Activated T-helper 2 cell treated with anti-CD3 and anti-CD28 coated beads, Interferon-gamma antibody, Interleukin-2, Interleukin-4, amounts not matched to agents 10 μg/mL and 5 μg/mL and 100 μg/mL, durations not matched to agents 14 hours and 24 hours and 36 hours (primary cell): ENCODE measurements at regions of chr19 and their contacts with region 1.

Region 1: DNA sequence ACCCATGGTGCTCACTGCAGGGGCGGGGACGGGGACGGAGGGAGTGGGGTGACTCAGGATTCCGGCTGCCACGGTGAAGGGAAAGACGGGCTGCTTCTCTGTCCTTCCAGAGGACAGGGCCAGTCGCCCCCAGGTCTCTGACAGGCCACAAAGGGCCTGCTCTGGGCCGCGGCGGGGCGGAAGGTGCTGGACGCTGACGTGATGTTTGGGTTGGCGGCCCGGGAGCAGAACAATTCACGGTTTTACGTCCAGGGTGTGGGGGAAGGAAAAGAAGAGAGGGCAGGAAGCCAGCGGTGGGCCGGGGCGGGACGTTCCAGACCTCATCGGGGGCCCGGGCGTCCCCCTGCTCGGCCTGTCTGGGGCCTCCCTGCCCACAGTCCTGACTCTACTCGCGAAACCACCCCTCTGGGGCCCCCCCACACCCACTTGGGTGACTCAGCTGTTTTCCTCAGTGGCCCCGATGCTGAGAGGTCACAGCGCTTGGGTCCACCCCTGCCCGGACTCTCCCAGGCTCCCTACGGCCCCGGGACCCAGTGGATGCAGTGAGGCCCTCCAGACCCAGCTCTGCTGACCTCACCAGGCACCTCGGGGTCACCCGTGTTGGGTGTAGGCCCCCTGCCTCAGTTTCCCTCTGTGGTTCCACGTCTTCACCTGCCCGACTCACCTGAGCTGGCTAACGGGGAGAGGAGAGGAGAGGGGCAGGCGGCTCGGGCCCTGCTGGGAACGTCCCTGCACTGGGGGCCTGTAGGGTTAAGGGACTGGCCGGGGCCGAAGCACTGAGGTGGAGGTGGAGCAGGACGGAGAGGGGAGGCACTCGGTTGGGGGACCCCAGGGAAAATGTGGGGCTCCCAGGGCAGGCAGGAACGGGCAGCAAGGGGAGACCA is 29.2 kb downstream of the PIP5K1C start:
- DNase-seq: no peak
- H3K4me3 Mint-ChIP-seq: peak overlapping the region; percentile 47
- H3K27ac Mint-ChIP-seq: peak overlapping the region; percentile 68
- H3K4me1 Mint-ChIP-seq: peaks cover 6% of the 10 kb centered on the region
- H3K27me3 Mint-ChIP-seq: no peaks in the 10 kb centered on the region

Region 2: DNA sequence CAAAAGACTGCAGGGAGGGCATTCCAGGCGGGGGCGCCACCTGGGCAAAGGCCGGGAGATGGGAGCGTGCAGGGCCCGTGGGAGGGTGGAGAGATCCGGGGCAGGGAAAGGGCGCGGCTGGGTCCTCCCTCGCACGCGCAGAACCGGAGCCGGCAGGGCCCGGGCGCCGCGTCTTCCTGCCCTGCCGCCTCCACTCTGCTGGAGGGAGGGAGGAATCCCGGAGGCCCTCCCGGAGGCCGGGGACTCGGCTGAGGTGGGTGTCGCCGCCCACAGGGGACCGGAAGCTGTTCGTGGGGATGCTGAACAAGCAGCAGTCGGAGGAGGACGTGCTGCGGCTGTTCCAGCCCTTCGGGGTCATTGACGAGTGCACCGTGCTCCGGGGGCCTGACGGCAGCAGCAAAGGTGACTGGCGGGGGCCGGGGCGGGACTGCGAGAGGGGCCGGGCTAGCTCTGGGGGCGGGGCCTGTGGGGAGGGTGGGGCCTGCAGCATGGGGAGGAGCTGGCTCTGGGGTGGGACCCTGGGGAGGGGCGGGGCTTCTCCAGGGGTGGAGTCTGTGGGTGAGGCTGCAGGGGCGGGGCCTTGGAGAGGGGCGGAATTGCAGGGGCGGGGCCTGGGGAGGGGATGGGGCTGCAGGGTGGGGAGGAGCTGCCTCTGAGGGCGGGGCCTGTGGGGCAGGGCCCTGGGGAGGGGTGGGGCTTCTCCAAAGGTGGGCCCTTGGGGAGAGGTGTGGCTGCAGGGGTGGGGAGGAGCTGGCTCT is 395.3 kb before region 1 on chr19:
- intact Hi-C with region 1: no loop called
- DNase-seq: peak; percentile 83
- H3K4me3 Mint-ChIP-seq: peak overlapping the region; percentile 79
- H3K27ac Mint-ChIP-seq: peak overlapping the region; percentile 39
- H3K4me1 Mint-ChIP-seq: peaks cover 8% of the 10 kb centered on the region
- H3K27me3 Mint-ChIP-seq: peaks cover 13% of the 10 kb centered on the region

Region 3: DNA sequence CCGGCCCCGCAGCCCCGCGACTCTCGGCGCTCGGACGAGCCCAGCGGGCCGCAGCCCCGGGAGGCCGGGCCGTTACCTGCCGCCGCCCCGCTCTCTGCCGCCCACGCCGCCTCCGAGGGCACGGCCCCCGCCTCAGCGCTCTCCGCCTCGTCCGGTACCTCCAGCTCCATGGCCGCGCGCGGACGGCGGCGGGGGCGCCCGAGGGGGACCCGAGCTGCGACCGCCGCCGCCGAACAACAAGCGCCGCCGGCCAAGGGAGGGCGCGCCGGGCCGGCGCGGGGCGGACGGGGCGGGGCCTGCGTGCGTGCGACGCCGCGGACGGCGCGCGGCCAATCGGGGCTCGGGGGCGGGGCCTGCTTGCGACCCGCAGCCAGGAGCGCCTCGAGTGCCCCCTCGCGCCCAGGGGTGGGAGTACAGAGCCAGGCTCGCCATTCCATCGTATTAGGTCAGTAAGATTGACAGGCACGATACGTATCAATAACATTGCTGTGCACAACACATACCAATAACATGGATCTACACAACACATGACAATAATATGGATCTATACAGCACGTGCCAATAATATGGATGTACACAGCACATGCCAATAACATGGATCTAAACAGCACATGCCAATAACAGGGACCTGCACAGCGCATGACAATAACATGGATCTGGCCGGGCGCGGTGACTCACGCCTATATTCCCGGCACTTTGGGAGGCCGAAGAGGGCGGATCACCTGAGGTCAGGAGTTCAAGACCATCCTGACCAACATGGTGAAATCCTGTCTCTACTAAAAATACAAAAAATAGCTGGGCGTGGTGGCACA is 29.4 kb after region 1 on chr19 and contains the start of gene PIP5K1C:
- intact Hi-C with region 1: loop called (anchors 2 kb)
- DNase-seq: peak; percentile 88
- H3K4me3 Mint-ChIP-seq: peak within 1 kb of the TSS; percentile 88
- H3K27ac Mint-ChIP-seq: peak within 1 kb of the TSS; percentile 52
- H3K4me1 Mint-ChIP-seq: peaks cover 8% of the 10 kb centered on the region
- H3K27me3 Mint-ChIP-seq: peaks cover 2% of the 10 kb centered on the region
- total RNA-seq, gene PIP5K1C: 22.5 and 23.6 TPM in 2 replicates